ENCODE measurements at regions of chr16 and their contacts with region 1.

Region 1: DNA sequence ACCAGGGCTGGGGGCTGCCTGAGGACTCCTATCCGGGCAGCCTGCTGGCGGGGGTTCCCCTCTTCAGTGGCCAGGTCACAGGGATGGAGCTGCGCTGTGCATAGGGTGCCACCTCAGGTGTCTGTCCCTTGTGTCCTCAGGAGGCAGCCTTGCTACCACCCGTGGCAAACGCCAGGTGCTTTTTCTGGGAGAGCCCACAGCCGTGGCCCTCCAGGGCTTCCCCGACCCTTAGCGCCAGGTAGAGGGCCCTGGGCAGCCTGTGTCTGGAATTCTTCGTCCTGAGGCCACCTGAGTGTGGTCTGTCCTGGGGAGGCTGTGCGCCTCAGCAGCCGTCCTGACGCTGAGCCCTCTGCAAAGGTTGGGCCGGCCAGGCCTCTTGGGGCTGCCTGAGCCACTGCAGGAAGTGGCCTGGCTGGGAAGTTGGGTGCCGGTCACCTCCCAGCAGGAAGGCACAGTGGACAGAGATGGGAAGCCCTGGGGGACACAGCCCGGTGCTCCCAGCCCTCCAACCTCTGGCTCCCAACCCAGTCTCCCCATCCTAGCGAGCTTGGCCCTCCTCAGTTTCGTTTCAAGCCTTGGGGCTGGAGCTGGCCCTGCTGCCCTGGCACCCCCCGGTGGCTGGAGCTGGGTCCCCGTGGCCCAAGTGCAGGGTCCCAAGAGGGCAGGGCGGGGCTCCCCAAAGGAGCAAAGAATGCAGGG is 7.6 kb upstream of the BAIAP3 start:
- DNase-seq: no peak
- H3K4me3 ChIP-seq: no peak overlapping the region
- H3K27ac ChIP-seq: 0 out of 2 replicates have a peak overlapping the region, but pooled peaks have one; percentile 5
- H3K4me1 ChIP-seq: no peaks in the 10 kb centered on the region; a peak in 2 of 7 replicates
- H3K27me3 ChIP-seq: no peaks in the 10 kb centered on the region
- CTCF ChIP-seq: no peak
- EP300 ChIP-seq: no peak
- POLR2A ChIP-seq: peak in 1 of 2 experiments; percentile 31; a peak in 1 of 3 replicates
- RAD21 ChIP-seq: no peak; a peak in 1 of 4 replicates

Region 2: GRCh38 chr16:1125471-1125870 is 200.4 kb before region 1 on chr16:
- CTCF ChIA-PET with region 1: no interaction called
- POLR2A ChIA-PET with region 1: no interaction called
- DNase-seq: no peak
- H3K4me3 ChIP-seq: no peak overlapping the region
- H3K27ac ChIP-seq: no peak overlapping the region
- H3K4me1 ChIP-seq: peaks cover 0 to 6% (median 0%) of the 10 kb centered on the region in 4 experiments; a peak in 2 of 7 replicates
- H3K27me3 ChIP-seq: no peaks in the 10 kb centered on the region
- CTCF ChIP-seq: no peak
- EP300 ChIP-seq: no peak
- POLR2A ChIP-seq: no peak
- RAD21 ChIP-seq: no peak

Region 3: DNA sequence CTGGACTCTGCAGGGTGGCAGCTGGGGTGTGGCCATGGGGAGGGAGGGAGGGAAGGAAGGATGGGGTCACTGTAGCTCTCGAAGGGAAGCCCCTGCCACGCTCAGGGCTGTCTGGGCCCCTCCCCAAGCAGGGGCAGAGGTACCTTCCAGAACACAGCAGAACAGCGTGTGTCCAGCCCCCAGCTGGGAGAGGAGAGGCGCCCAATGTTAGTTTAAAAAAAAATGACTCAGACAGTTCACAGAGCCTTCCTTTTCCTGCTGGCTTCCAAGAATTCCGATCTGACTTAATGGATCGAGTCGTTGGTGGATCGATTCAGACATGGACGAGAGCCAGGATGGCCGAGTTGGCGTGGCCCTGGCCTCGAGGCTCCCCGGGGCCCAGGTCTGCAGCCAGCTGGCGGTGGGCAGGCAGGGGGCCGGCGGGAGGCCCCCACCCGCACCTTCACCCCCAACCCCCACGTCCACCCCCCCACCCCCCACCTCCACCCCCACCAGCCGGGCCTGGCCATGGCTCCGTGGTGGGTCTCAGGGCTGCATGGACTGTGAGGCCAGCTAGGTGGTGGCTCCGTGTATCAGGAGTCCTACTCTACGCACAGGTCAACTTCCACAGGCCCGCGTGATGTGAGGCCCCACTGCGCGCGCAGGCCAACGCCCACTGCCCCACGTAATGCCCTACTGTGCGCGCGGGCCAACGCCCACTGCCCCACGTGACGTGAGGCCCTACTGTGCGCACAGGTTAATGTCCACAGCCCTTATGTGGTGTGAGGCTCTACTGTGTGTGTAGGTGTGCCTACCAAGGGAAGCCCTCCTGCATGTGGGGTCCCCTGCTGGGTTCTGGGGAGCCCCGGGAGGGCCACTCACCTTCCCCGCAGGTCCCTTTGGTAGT is 151.1 kb before region 1 on chr16:
- CTCF ChIA-PET with region 1: no interaction called
- POLR2A ChIA-PET with region 1: no interaction called
- DNase-seq: no peak
- H3K4me3 ChIP-seq: no peak overlapping the region
- H3K27ac ChIP-seq: no peak overlapping the region
- H3K4me1 ChIP-seq: peaks cover 0 to 4% (median under 1%) of the 10 kb centered on the region in 4 experiments; a peak in 1 of 7 replicates
- H3K27me3 ChIP-seq: no peaks in the 10 kb centered on the region
- CTCF ChIP-seq: no peak
- EP300 ChIP-seq: no peak
- POLR2A ChIP-seq: no peak
- RAD21 ChIP-seq: no peak

Region 4: DNA sequence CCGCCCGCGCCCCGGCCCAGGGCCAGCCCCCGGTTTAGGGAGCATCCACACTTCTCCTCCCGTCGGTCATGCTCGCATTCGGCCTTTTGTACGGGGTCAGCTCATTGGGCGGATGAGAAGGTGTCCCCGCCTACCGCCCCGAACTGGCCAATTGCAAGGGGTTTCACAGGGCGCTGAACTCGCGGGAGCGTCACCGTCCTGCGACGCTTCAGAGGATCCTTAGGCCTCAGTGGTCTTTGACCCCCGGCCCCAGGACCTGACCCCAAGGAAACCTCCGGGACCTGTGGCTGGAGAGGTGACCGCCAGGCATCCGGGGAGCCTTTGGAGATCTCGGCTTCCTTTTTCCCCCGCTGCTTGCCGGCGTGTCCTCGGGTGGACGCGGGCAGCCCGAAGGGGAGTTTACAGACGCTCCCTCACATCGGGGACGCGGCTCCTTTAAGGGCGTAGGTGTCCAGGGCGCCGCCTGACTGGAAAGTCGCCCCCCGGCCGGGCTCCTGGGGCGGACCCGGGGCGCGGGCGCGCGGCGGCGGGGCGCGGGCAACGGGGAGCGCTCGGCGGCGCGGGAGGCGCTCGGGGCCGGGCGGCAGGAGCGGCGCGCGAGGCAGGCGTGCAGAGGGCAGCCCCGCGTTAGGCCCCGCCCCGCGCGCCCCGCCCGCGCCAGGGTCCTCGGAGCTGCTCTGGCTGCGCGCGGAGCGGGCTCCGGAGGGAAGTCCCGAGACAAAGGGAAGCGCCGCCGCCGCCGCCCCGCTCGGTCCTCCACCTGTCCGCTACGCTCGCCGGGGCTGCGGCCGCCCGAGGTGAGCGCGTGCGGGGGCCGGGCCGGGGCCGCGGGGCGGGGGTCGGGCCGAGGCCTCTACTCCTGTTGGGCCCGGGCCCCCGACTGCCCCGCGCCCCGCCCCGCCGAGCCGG is 16.6 kb before region 1 on chr16 and contains the start of gene UBE2I:
- CTCF ChIA-PET with region 1: interaction called, 6 read pairs
- POLR2A ChIA-PET with region 1: interaction called, 106 read pairs
- DNase-seq: peak; percentile 87 to 99
- H3K4me3 ChIP-seq: peak within 1 kb of the TSS; percentile 89 to 98 (median 96)
- H3K27ac ChIP-seq: peak within 1 kb of the TSS; percentile 100
- H3K4me1 ChIP-seq: peaks cover 0 to 13% (median 6%) of the 10 kb centered on the region in 4 experiments; a peak in 6 of 7 replicates
- H3K27me3 ChIP-seq: no peaks in the 10 kb centered on the region
- CTCF ChIP-seq: no peak
- EP300 ChIP-seq: no peak
- POLR2A ChIP-seq: peak in 1 of 2 experiments; percentile 54; a peak in 1 of 3 replicates
- RAD21 ChIP-seq: no peak
- total RNA-seq, gene UBE2I: 268 and 272 TPM in 2 replicates

Measured in H1 (cell line).